ENCODE measurements at regions of chr5 and their contacts with region 1.

Region 1: DNA sequence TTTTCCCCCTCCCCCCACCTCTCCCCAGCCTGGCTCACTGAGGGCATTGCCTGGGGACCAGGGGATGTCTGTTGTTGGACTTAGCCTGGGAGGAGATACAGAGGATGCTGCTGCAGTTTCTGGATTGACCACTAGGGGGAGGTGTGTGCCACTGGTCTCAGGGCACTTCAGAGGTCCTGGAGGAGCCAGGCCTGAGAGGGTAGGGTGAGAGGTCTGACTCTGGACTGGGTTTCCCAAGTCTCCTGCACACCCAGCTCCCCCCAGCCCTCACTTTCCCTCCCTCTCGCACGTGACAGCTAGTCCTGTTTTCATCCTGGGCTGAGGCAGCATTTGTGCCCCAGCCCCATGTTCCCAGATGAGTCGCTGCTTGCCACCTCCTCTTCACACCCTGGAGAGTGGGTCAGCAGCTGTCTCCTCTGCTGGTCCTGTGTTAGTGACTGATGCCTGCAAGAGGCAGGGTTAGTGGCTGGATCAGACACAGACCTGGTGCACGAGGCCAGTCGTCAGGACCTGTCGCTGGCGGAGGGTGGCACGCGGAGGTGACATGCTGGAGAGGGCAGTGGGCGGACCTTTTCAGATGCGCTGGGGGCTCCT is 4.4 kb downstream of the IL3 start:
- DNase-seq: peak; percentile 81
- H3K27ac ChIP-seq: peak overlapping the region; percentile 43
- CTCF ChIP-seq: peak; percentile 94

Region 2: GRCh38 chr5:131810510-131811249 is 254.2 kb before region 1 on chr5:
- CTCF ChIA-PET with region 1: interaction called, 11 read pairs
- POLR2A ChIA-PET with region 1: no interaction called
- DNase-seq: peak; percentile 36
- H3K27ac ChIP-seq: no peak overlapping the region
- CTCF ChIP-seq: no peak

Region 3: GRCh38 chr5:132079619-132080018 is 14.8 kb after region 1 on chr5:
- CTCF ChIA-PET with region 1: interaction called, 10 read pairs
- POLR2A ChIA-PET with region 1: no interaction called
- DNase-seq: no peak
- H3K27ac ChIP-seq: no peak overlapping the region
- CTCF ChIP-seq: no peak

Region 4: GRCh38 chr5:132087176-132087575 is 22.3 kb after region 1 on chr5:
- CTCF ChIA-PET with region 1: interaction called, 12 read pairs
- POLR2A ChIA-PET with region 1: no interaction called
- DNase-seq: no peak
- H3K27ac ChIP-seq: peak overlapping the region; percentile 73; the same call in 1 of the 2 replicates
- CTCF ChIP-seq: no peak

Region 5: DNA sequence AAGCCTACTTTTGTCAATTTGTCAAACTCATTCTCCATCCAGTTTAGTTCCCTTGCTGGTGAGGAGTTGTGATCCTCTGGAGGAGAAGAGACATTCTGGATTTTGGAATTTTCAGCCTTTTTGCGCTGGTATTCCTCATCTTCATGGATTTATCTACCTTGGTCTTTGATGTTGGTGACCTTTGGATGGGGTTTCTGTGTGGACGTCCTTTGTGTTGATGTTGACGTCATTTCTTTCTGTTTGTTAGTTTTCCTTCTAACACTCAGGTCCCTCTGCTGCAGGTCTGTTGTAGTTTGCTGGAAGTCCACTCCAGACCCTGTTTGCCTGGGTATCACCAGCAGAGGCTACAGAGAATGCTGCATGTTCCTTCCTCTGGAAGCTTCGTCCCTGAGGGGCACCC is 91.6 kb after region 1 on chr5:
- CTCF ChIA-PET with region 1: no interaction called
- POLR2A ChIA-PET with region 1: no interaction called
- DNase-seq: no peak
- H3K27ac ChIP-seq: no peak overlapping the region
- CTCF ChIP-seq: no peak

Region 6: GRCh38 chr5:132180134-132180745 is 115.4 kb after region 1 on chr5:
- CTCF ChIA-PET with region 1: interaction called, 14 read pairs
- POLR2A ChIA-PET with region 1: no interaction called
- DNase-seq: peak; percentile 78
- H3K27ac ChIP-seq: no peak overlapping the region
- CTCF ChIP-seq: peak; percentile 89

Region 7: DNA sequence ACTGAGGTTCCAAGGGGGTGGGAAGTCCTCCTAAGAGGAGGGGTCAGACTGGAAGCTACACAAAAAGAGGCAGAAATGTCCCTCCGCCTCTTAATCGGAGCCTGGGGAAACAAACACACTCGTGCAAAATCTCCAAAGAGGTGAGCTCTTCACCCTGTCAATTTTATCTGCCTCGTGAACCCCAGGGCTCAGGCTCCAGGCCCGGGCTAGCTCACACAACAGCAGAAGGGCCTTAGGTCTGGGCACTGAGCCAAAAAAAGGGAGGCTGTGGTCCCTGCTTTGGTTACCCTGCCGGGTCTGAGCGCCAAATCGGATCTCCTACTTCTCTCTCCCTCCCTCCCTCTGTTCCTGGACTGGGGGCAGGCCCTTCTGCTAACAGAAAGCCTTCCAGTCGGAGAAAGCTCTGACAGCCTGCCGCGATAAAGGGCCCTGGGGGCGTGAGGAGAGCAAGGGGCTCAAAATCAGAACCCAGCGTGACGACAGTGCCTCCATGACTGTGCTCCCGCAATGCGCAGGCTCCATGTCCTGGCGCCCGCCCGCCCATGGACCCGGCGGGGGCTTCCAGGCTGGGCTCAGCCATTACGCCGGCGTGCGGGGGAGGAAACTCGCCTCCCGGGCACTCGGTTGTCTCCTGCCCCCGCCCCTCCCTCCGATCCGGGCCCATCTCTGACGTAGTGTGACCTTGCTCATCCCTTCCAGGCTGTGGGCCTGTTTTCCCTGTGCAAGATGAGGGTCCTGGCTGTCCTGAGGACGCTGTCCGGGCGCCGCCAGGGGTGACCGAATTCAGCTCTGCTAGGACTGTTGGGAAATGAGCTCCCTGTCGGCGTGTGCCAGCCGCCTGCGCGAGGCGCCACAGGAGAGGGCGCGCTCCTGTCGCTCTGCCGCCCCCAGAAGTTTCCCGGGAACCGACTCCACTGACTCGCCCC is 228.5 kb after region 1 on chr5:
- CTCF ChIA-PET with region 1: interaction called, 11 read pairs
- POLR2A ChIA-PET with region 1: no interaction called
- DNase-seq: peak; percentile 93
- H3K27ac ChIP-seq: peak overlapping the region; percentile 98
- CTCF ChIP-seq: no peak; the same call in 1 of the 2 replicates